ENCODE measurements at regions of chr1 and their contacts with region 1.

Region 1: GRCh38 chr1:44377925-44378784 is 23.1 kb upstream of the ERI3 start:
- DNase-seq: peak; percentile 80 to 88 (median 83)
- H3K4me3 ChIP-seq: no peak overlapping the region
- H3K27ac ChIP-seq: no peak overlapping the region
- H3K4me1 ChIP-seq: peaks cover 0 to 3% (median 1%) of the 10 kb centered on the region in 4 experiments
- H3K27me3 ChIP-seq: no peaks in the 10 kb centered on the region

Region 2: GRCh38 chr1:44361478-44361877 is 16.7 kb before region 1 on chr1:
- CTCF ChIA-PET with region 1: interaction called, 12 read pairs
- POLR2A ChIA-PET with region 1: no interaction called
- DNase-seq: peak in 2 of 3 donors; percentile 13 to 21
- H3K4me3 ChIP-seq: no peak overlapping the region
- H3K27ac ChIP-seq: no peak overlapping the region
- H3K4me1 ChIP-seq: no peaks in the 10 kb centered on the region
- H3K27me3 ChIP-seq: peaks cover 0 to 2% (median 0%) of the 10 kb centered on the region in 5 experiments

Region 3: GRCh38 chr1:44390277-44390676 is 12.1 kb after region 1 on chr1:
- CTCF ChIA-PET with region 1: interaction called, 32 read pairs
- POLR2A ChIA-PET with region 1: no interaction called
- DNase-seq: no peak
- H3K4me3 ChIP-seq: no peak overlapping the region
- H3K27ac ChIP-seq: no peak overlapping the region
- H3K4me1 ChIP-seq: no peaks in the 10 kb centered on the region
- H3K27me3 ChIP-seq: no peaks in the 10 kb centered on the region

Region 4: GRCh38 chr1:44543064-44543744 is 165.0 kb after region 1 on chr1:
- CTCF ChIA-PET with region 1: interaction called, 10 read pairs
- POLR2A ChIA-PET with region 1: no interaction called
- DNase-seq: peak; percentile 77 to 92 (median 92)
- H3K4me3 ChIP-seq: peak overlapping the region in 3 of 7 experiments; percentile 8 to 22 (median 13)
- H3K27ac ChIP-seq: peak overlapping the region in 1 of 2 experiments; percentile 52
- H3K4me1 ChIP-seq: peaks cover 0 to 40% (median 33%) of the 10 kb centered on the region in 4 experiments
- H3K27me3 ChIP-seq: no peaks in the 10 kb centered on the region

Region 5: DNA sequence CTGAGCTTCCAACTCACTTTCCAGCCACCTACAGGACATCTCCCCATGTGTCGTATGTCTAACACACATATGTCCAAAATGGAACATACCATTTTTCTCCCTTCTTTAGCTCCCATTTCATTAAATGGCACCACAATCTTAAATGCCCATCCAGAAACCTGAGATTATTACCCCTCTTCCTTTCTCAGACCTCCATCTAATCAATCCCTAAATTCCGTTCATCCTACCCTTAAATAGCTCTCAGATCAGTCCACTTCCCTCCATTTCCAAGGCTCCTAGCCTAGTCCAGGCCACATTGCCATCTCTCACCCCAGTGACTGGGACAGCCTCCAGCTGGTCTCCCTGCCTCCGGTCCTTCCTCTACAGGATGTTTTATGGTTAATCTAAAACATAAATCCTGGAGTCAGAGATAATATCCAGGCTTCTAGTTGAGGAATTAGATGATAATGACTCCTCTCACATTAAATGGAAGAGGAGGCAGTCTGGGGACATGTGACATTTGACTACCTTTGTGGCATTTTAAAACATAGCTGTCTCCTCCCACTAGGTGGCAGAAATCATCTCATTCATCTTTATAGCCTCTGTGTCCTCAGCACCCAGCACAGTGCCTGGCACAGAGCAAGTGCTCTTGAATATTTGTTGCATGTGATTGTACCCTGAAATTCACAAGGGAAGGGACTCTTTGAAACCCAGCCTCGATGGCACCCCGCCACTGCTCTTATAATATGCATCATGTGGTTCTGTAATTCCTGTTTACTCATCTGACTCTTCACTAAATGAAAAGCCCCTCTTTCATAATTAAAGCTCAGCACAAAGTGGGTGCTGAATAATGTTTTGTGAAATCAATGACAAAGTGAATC is 193.8 kb after region 1 on chr1:
- CTCF ChIA-PET with region 1: interaction called, 18 read pairs
- POLR2A ChIA-PET with region 1: no interaction called
- DNase-seq: peak in 2 of 3 donors; percentile 50 to 52
- H3K4me3 ChIP-seq: no peak overlapping the region
- H3K27ac ChIP-seq: no peak overlapping the region
- H3K4me1 ChIP-seq: peaks cover 0 to 10% (median 0%) of the 10 kb centered on the region in 4 experiments
- H3K27me3 ChIP-seq: no peaks in the 10 kb centered on the region